ENCODE measurements at regions of chr3 and their contacts with region 1.

Region 1: DNA sequence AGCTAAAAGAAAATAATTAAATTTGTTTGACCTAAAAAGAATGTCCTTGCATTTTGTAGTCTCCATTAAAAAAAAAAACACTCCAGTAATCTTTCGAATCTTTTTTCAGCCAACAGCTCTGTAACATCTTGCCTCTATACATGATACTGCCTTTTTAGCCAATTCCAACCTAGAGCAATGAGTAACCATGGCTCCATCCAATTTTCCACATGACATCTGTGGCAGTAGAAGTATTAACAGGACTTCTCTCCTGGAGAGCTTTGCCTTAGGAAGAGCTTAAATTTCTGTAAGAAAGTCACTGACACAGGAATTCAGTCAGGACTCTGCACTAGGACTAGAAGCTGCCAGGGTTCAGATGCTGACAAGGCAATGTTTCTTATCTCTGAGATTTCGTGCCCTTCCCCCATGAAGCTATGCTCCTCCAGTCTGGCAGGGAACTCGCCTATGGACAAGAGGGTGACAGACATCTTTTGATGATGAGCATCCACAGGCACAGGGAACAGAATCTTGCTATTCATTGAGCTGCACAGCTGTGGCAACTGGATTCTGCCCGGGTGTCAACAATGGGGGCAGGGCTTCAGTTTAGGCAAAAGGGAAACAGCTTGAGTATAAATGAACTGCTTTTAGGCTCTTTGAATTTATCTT is 81.8 kb downstream of the ALCAM start:
- DNase-seq: no peak
- H3K4me3 ChIP-seq: no peak overlapping the region
- H3K27ac ChIP-seq: no peak overlapping the region
- H3K4me1 ChIP-seq: 0 out of 2 replicates have a peak, but pooled peaks cover 4% of the 10 kb centered on the region
- H3K27me3 ChIP-seq: no peaks in the 10 kb centered on the region
- CTCF ChIP-seq: no peak

Region 2: GRCh38 chr3:105051111-105051510 is 397.3 kb before region 1 on chr3:
- CTCF ChIA-PET with region 1: no interaction called
- POLR2A ChIA-PET with region 1: no interaction called
- intact Hi-C with region 1: no loop called
- DNase-seq: no peak
- H3K4me3 ChIP-seq: no peak overlapping the region
- H3K27ac ChIP-seq: no peak overlapping the region
- H3K4me1 ChIP-seq: no peaks in the 10 kb centered on the region
- H3K27me3 ChIP-seq: no peaks in the 10 kb centered on the region
- CTCF ChIP-seq: no peak

Region 3: DNA sequence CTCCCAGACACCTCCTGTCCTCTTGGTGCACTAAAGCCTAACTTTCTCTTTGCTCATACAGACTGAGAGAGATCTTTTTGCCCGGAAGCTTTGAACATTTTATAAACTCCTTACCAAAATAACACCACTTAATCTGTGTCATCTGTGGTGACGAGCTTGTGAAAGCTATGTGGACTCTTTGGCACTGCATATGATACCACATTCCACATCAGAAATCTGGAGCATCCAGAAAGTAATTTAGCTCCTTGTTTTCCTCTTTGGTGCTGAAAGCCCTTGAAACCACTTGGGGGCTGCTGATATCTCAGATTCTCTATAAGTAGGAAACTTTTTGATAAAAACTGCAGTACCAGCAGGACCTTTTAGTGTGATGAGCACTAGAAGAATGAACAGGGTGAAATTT is 46.6 kb after region 1 on chr3:
- CTCF ChIA-PET with region 1: interaction called, 15 read pairs
- POLR2A ChIA-PET with region 1: no interaction called
- intact Hi-C with region 1: no loop called
- DNase-seq: no peak
- H3K4me3 ChIP-seq: no peak overlapping the region
- H3K27ac ChIP-seq: no peak overlapping the region
- H3K4me1 ChIP-seq: no peaks in the 10 kb centered on the region
- H3K27me3 ChIP-seq: no peaks in the 10 kb centered on the region
- CTCF ChIP-seq: no peak